Activated CD4-positive, alpha-beta memory T cell treated with anti-CD3 and anti-CD28 coated beads for 36 hours (primary cell): ENCODE measurements at regions of chr13 and their contacts with region 1.

Region 1: DNA sequence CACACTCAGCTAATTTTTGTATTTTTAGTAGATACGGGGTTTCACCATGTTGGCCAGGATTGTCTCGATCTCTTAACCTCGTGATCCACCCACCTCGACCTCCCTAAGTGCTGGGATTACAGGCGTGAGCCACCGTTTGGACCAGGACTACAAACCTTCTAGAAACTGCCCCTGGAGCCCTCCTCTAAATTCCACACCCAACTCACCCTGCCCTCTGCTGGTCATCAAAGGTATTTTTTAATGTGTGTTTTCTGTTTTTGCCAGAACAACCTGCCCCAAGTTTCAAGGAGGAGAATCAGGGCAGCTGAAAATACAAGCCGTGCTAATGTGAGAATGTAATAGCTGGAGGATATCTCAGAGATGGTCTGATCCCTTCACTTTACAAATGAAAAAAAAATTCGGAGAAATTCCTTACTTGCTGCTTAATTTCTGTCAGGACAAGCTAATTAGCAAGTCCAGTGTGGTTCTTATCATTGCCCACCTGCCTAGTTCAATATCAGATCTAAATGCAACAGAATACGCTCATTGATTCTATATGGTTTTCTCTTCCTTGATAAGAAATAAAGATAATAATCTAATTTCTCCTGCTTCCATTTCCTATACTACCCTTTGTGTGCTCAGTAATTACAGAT is 4.1 kb downstream of the ATP8A2 start:
- DNase-seq: peak; percentile 30
- H3K4me3 Mint-ChIP-seq: no peak overlapping the region
- H3K27ac Mint-ChIP-seq: no peak overlapping the region
- H3K4me1 Mint-ChIP-seq: peaks cover 9% of the 10 kb centered on the region
- H3K27me3 Mint-ChIP-seq: peaks cover 44% of the 10 kb centered on the region

Region 2: GRCh38 chr13:25001476-25002206 is 374.2 kb before region 1 on chr13:
- CTCF ChIA-PET with region 1: interaction called, 8 read pairs
- POLR2A ChIA-PET with region 1: no interaction called
- intact Hi-C with region 1: loop called (anchors 2 kb)
- DNase-seq: no peak
- H3K4me3 Mint-ChIP-seq: no peak overlapping the region
- H3K27ac Mint-ChIP-seq: no peak overlapping the region
- H3K4me1 Mint-ChIP-seq: peaks cover 2% of the 10 kb centered on the region
- H3K27me3 Mint-ChIP-seq: peaks cover 35% of the 10 kb centered on the region

Region 3: DNA sequence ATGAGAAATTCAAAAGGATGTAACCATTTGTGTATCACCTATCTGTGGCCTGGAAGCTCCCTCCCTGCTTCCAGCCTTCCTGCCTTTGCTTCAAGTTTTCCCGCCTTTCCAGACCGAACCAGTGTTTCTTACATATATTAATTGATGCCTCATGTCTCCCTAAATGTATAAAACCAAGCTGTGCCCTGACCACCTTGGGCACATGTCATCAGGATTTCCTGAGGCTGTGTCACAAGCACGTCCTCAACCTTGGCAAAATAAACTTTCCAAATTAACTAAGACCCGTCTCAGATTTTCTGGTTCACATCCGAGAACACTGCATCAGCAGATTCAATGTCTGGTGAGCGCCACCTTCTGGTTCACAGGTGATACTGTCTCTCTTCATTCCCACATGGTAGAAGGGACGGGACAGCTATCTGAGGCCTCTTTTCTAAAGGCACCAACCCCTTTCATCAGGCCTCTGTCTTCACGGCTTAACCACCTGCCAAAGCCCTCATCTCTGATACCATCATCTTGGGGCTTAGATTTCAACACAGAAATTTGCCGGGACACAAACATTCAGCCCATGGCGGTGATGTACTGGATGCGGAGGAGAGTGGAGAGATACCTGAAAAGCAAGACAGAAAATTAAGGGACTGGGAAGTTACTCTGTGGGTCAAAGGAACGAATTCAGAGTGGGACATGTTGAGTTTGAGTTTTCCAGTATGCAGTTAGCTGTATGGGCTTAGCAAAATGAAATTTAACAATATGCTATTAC is 338.6 kb before region 1 on chr13:
- CTCF ChIA-PET with region 1: no interaction called
- POLR2A ChIA-PET with region 1: no interaction called
- intact Hi-C with region 1: no loop called
- DNase-seq: peak; percentile 62
- H3K4me3 Mint-ChIP-seq: no peak overlapping the region
- H3K27ac Mint-ChIP-seq: no peak overlapping the region
- H3K4me1 Mint-ChIP-seq: no peaks in the 10 kb centered on the region
- H3K27me3 Mint-ChIP-seq: peaks cover 33% of the 10 kb centered on the region

Region 4: DNA sequence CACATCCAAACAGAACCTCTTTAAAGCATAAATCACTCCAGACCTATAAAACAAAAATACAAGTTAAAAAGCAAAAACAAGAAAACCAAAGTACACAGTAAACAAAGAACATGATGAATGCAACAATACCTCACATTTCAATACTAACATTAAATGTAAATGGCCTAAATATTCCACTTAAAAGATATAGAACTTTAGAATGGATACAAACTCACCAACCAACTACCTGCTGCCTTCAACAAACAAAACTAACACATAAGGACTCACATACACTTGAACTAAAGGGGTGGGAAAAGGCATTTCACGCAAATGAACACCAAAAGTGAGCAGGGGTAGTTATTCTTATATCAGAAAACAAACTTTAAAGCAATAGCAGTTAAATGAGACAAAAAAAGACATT is 324.8 kb before region 1 on chr13:
- CTCF ChIA-PET with region 1: no interaction called
- POLR2A ChIA-PET with region 1: no interaction called
- intact Hi-C with region 1: no loop called
- DNase-seq: no peak
- H3K4me3 Mint-ChIP-seq: no peak overlapping the region
- H3K27ac Mint-ChIP-seq: no peak overlapping the region
- H3K4me1 Mint-ChIP-seq: peaks cover 3% of the 10 kb centered on the region
- H3K27me3 Mint-ChIP-seq: peaks cover 39% of the 10 kb centered on the region

Region 5: GRCh38 chr13:25085125-25085742 is 290.6 kb before region 1 on chr13:
- CTCF ChIA-PET with region 1: interaction called, 6 read pairs
- POLR2A ChIA-PET with region 1: no interaction called
- intact Hi-C with region 1: loop called (anchors 2 kb)
- DNase-seq: peak; percentile 15
- H3K4me3 Mint-ChIP-seq: no peak overlapping the region
- H3K27ac Mint-ChIP-seq: no peak overlapping the region
- H3K4me1 Mint-ChIP-seq: no peaks in the 10 kb centered on the region
- H3K27me3 Mint-ChIP-seq: peaks cover 5% of the 10 kb centered on the region

Region 6: GRCh38 chr13:25232937-25233515 is 142.8 kb before region 1 on chr13:
- CTCF ChIA-PET with region 1: interaction called, 10 read pairs
- POLR2A ChIA-PET with region 1: no interaction called
- intact Hi-C with region 1: loop called (anchors 2 kb)
- DNase-seq: no peak
- H3K4me3 Mint-ChIP-seq: no peak overlapping the region
- H3K27ac Mint-ChIP-seq: no peak overlapping the region
- H3K4me1 Mint-ChIP-seq: no peaks in the 10 kb centered on the region
- H3K27me3 Mint-ChIP-seq: peaks cover 8% of the 10 kb centered on the region

Region 7: DNA sequence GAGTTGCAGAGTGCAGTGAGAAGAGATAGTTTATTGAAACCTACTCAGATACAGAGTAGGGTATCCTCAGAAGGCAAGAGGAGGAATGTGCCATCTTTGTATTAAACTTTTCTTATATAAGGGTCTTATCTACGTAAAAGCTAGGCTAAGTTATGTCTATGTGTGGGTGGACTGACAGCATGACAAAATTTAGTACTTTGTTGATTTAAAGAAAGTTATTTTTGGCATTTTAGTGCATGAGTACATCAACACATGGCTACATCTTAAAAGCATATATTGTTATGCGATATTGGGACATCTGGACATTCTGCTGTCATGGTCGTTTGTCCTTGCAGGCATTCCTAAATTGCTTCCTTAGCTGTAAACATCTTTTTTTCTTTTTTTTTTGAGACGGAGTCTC is 23.0 kb before region 1 on chr13:
- CTCF ChIA-PET with region 1: interaction called, 12 read pairs
- POLR2A ChIA-PET with region 1: no interaction called
- intact Hi-C with region 1: no loop called
- DNase-seq: no peak
- H3K4me3 Mint-ChIP-seq: no peak overlapping the region
- H3K27ac Mint-ChIP-seq: no peak overlapping the region
- H3K4me1 Mint-ChIP-seq: no peaks in the 10 kb centered on the region
- H3K27me3 Mint-ChIP-seq: peaks cover 25% of the 10 kb centered on the region

Region 8: GRCh38 chr13:25391932-25392331 is 16.1 kb after region 1 on chr13:
- CTCF ChIA-PET with region 1: interaction called, 13 read pairs
- POLR2A ChIA-PET with region 1: no interaction called
- intact Hi-C with region 1: no loop called
- DNase-seq: no peak
- H3K4me3 Mint-ChIP-seq: no peak overlapping the region
- H3K27ac Mint-ChIP-seq: no peak overlapping the region
- H3K4me1 Mint-ChIP-seq: no peaks in the 10 kb centered on the region
- H3K27me3 Mint-ChIP-seq: peaks cover 21% of the 10 kb centered on the region

Region 9: DNA sequence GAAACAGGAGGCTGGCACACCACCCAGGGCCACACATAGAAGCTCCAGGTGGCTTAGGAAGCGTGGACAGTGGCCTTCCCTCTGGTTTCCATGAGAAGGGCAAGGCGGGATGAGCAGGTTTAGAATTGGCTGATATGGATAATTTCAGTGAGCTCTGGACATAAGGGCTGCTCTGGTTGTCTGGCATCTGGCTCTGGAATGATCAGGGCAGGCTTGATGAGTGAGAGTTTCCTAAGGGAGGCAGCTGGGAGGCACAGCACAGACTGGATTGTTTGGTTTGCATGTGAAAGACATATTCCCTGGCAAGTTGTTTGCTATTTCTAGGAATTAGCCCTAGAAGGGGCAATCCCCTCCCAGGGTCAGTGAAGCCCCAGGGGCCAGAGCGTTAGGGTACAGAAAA is 125.4 kb after region 1 on chr13:
- CTCF ChIA-PET with region 1: no interaction called
- POLR2A ChIA-PET with region 1: no interaction called
- intact Hi-C with region 1: no loop called
- DNase-seq: no peak
- H3K4me3 Mint-ChIP-seq: no peak overlapping the region
- H3K27ac Mint-ChIP-seq: no peak overlapping the region
- H3K4me1 Mint-ChIP-seq: no peaks in the 10 kb centered on the region
- H3K27me3 Mint-ChIP-seq: peaks cover 5% of the 10 kb centered on the region

Region 10: DNA sequence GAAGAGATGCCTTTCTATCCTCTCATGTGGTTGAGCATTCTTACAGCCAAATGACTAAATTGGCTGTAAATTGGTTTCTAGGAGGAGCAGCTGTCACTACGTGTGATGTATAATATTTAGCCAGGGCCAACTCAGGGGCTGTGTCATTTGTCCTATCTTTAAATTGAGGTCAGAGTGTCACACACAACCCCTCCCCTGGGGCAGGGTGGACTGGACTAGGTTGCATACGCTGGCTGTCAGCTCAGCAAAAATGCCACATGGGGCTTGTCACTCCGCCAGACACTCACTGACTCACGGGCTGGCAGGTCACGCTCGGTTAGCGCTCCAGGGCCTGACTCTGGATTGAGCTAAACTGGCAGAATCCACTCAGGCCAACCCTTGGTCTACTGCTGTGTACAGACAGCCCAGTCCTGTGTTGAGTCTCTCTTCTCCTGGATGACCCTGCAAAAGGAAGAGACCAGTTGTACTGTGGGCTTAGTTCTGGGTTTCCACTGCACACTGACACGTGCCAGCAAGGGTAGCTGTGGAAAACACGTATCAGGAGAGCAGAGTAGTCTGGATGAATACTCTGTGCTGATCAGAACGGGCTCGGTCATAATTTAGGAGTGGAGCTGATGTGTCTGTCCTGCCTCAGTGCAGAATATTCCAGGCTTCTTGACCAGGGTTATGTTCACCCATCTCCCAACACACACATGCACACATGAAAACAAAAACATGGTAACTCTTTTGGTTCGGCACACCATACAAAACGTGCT is 646.9 kb after region 1 on chr13:
- CTCF ChIA-PET with region 1: no interaction called
- POLR2A ChIA-PET with region 1: no interaction called
- intact Hi-C with region 1: no loop called
- DNase-seq: no peak
- H3K4me3 Mint-ChIP-seq: no peak overlapping the region
- H3K27ac Mint-ChIP-seq: no peak overlapping the region
- H3K4me1 Mint-ChIP-seq: peaks cover 7% of the 10 kb centered on the region
- H3K27me3 Mint-ChIP-seq: no peaks in the 10 kb centered on the region